Activated CD4-positive, alpha-beta T cell treated with anti-CD3 and anti-CD28 coated beads for 36 hours (primary cell): ENCODE measurements at regions of chr6 and their contacts with region 1.

Region 1: GRCh38 chr6:144131248-144131709 is 19.0 kb upstream of the STX11 start:
- DNase-seq: no peak
- ATAC-seq: peak; percentile 94
- H3K4me3 Mint-ChIP-seq: peak overlapping the region; percentile 47
- H3K27ac Mint-ChIP-seq: peak overlapping the region; percentile 91
- H3K4me1 Mint-ChIP-seq: peaks cover 38% of the 10 kb centered on the region
- H3K27me3 Mint-ChIP-seq: peaks cover 2% of the 10 kb centered on the region

Region 2: GRCh38 chr6:144095331-144096002 is 35.8 kb before region 1 on chr6 and contains the start of gene SF3B5:
- CTCF ChIA-PET with region 1: interaction called, 3 read pairs
- POLR2A ChIA-PET with region 1: no interaction called
- intact Hi-C with region 1: loop called in 1 of 2 experiments (anchors 1 kb)
- DNase-seq: peak; percentile 98
- ATAC-seq: peak; percentile 97
- H3K4me3 Mint-ChIP-seq: peak within 1 kb of the TSS; percentile 84
- H3K27ac Mint-ChIP-seq: peak within 1 kb of the TSS; percentile 91
- H3K4me1 Mint-ChIP-seq: peaks cover 22% of the 10 kb centered on the region
- H3K27me3 Mint-ChIP-seq: no peaks in the 10 kb centered on the region
- total RNA-seq, gene SF3B5: 152 to 164 TPM

Region 3: GRCh38 chr6:144149891-144150709 is 18.8 kb after region 1 on chr6 and contains the start of gene STX11:
- CTCF ChIA-PET with region 1: interaction called, 6 read pairs
- POLR2A ChIA-PET with region 1: interaction called, 11 read pairs
- intact Hi-C with region 1: loop called (anchors 1 kb)
- DNase-seq: peak; percentile 91
- ATAC-seq: peak; percentile 80
- H3K4me3 Mint-ChIP-seq: peak within 1 kb of the TSS; percentile 84
- H3K27ac Mint-ChIP-seq: peak within 1 kb of the TSS; percentile 95
- H3K4me1 Mint-ChIP-seq: peaks cover 41% of the 10 kb centered on the region
- H3K27me3 Mint-ChIP-seq: peaks cover 5% of the 10 kb centered on the region
- total RNA-seq, gene STX11: 19.6 to 20.9 TPM

Region 4: DNA sequence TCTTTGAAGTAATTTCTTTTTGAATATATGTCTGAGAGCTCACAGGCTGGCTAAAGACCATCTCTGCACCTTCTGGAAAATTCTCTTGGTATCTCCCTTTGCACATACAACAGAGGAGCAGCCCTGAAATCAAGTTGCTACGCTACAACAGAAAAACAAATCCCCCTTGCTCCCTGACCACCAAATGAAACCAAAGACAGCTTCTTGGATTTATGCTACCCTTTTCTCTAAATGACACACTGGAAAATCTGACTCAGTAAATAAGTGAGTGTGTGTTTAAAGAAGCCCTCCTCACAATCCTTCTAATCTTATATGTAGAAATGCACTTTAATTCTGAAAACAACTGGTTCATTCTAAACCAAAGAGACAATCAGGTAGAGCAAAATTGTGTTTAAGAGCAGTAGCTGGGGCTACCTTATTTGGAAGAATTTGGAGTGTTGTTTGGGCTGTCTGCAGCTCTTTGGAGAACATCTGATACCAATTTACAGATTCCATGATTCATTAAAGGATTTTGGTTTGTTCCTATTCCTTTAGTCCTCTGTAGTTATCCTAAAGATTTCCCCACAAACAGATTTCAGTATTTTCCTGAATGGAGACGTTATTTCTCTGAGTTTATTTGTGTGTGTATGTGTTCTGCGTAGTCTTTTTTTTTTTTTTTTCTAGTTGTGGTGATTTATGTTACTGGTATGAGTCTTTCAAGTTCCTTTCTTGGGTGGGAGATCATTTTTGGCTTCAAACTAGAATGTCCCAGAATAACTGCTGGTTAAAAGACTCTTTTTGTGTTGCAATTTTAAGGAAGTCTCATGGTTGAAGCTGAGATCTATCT is 117.4 kb after region 1 on chr6:
- CTCF ChIA-PET with region 1: no interaction called
- POLR2A ChIA-PET with region 1: no interaction called
- intact Hi-C with region 1: loop called in 1 of 2 experiments (anchors 1 kb)
- DNase-seq: peak; percentile 11
- ATAC-seq: peak; percentile 57
- H3K4me3 Mint-ChIP-seq: no peak overlapping the region
- H3K27ac Mint-ChIP-seq: peak overlapping the region; percentile 17
- H3K4me1 Mint-ChIP-seq: peaks cover 17% of the 10 kb centered on the region
- H3K27me3 Mint-ChIP-seq: peaks cover 12% of the 10 kb centered on the region

Region 5: GRCh38 chr6:144349690-144350527 is 218.6 kb after region 1 on chr6:
- CTCF ChIA-PET with region 1: no interaction called
- POLR2A ChIA-PET with region 1: no interaction called
- intact Hi-C with region 1: loop called (anchors 2 to 5 kb)
- DNase-seq: no peak
- ATAC-seq: peak; percentile 45
- H3K4me3 Mint-ChIP-seq: peak overlapping the region; percentile 69
- H3K27ac Mint-ChIP-seq: peak overlapping the region; percentile 96
- H3K4me1 Mint-ChIP-seq: peaks cover 88% of the 10 kb centered on the region
- H3K27me3 Mint-ChIP-seq: no peaks in the 10 kb centered on the region